ENCODE measurements at regions of chr2 and their contacts with region 1.

Region 1: DNA sequence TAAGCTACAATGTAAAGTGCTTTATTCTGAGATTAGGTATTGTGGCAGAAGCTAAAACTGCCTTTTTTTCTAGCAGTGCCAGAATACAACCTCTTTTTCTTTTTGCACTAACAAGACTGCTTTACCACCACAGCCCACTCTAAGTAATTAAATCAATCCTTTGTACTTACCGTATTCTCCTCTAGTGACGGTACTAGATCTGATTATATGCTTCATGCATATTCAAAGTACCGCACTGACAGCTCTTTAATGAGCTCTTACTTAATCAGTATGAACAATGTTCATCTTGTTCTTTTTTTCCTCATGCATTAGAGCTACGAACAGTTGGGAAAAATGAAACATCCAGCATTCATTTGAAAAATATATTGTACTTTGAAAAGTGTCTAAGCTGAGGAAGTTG is 16.1 kb upstream of the OTX1 start:
- DNase-seq: no peak
- ATAC-seq: no peak
- H3K4me3 ChIP-seq: no peak overlapping the region
- H3K27ac ChIP-seq: no peak overlapping the region
- H3K4me1 ChIP-seq: no peaks in the 10 kb centered on the region
- H3K27me3 ChIP-seq: no peaks in the 10 kb centered on the region
- CTCF ChIP-seq: no peak
- EP300 ChIP-seq: no peak
- POLR2A ChIP-seq: no peak
- RAD21 ChIP-seq: no peak

Region 2: DNA sequence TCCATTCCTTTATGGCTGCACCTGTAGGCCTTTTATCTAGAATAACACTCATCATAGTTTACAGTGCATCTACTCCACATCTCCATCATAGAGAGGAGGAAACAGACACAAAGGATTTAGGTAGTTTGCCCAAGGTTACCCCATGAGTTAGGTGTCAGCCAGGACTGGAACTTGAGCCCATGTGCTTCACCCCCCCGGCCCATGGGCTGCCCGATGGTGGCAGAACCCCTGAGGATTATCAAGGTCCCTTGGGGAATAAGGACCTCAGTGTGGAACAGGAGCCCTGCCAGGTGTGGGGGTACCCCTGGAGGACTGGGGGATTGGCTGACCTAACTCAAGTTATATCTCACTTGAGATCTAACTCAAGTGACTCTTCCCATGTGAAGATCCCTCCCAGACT is 130.2 kb before region 1 on chr2:
- CTCF ChIA-PET with region 1: no interaction called
- POLR2A ChIA-PET with region 1: no interaction called
- RAD21 ChIA-PET with region 1: no interaction called
- SMC1A ChIA-PET with region 1: no interaction called
- in situ Hi-C with region 1: no loop called
- intact Hi-C with region 1: no loop called
- DNase-seq: no peak
- ATAC-seq: no peak
- H3K4me3 ChIP-seq: no peak overlapping the region
- H3K27ac ChIP-seq: no peak overlapping the region
- H3K4me1 ChIP-seq: no peaks in the 10 kb centered on the region
- H3K27me3 ChIP-seq: no peaks in the 10 kb centered on the region
- CTCF ChIP-seq: no peak
- EP300 ChIP-seq: no peak
- POLR2A ChIP-seq: no peak
- RAD21 ChIP-seq: no peak

Region 3: GRCh38 chr2:62939735-62940491 is 94.6 kb before region 1 on chr2:
- CTCF ChIA-PET with region 1: no interaction called
- POLR2A ChIA-PET with region 1: interaction called, 14 read pairs
- RAD21 ChIA-PET with region 1: no interaction called
- SMC1A ChIA-PET with region 1: no interaction called
- in situ Hi-C with region 1: no loop called
- intact Hi-C with region 1: no loop called
- DNase-seq: no peak
- ATAC-seq: no peak; the same call in 2 of the 3 replicates
- H3K4me3 ChIP-seq: no peak overlapping the region
- H3K27ac ChIP-seq: no peak overlapping the region
- H3K4me1 ChIP-seq: no peaks in the 10 kb centered on the region
- H3K27me3 ChIP-seq: no peaks in the 10 kb centered on the region
- CTCF ChIP-seq: no peak
- EP300 ChIP-seq: no peak
- POLR2A ChIP-seq: no peak
- RAD21 ChIP-seq: no peak

Region 4: GRCh38 chr2:63058921-63059792 is 24.6 kb after region 1 on chr2:
- CTCF ChIA-PET with region 1: no interaction called
- POLR2A ChIA-PET with region 1: no interaction called
- RAD21 ChIA-PET with region 1: no interaction called
- SMC1A ChIA-PET with region 1: no interaction called
- in situ Hi-C with region 1: no loop called
- intact Hi-C with region 1: no loop called
- DNase-seq: no peak
- ATAC-seq: peak; percentile 24
- H3K4me3 ChIP-seq: 0 out of 2 replicates have a peak overlapping the region, but pooled peaks have one; percentile 30
- H3K27ac ChIP-seq: no peak overlapping the region
- H3K4me1 ChIP-seq: peaks cover 9% of the 10 kb centered on the region; the same call in 1 of the 2 replicates
- H3K27me3 ChIP-seq: peaks cover 5 to 21% of the 10 kb centered on the region in 2 experiments
- CTCF ChIP-seq: no peak
- EP300 ChIP-seq: no peak
- POLR2A ChIP-seq: no peak
- RAD21 ChIP-seq: no peak

Measured in GM12878 (cell line).